Panc1 (cell line): ENCODE measurements at regions of chr12 and their contacts with region 1.

Region 1: DNA sequence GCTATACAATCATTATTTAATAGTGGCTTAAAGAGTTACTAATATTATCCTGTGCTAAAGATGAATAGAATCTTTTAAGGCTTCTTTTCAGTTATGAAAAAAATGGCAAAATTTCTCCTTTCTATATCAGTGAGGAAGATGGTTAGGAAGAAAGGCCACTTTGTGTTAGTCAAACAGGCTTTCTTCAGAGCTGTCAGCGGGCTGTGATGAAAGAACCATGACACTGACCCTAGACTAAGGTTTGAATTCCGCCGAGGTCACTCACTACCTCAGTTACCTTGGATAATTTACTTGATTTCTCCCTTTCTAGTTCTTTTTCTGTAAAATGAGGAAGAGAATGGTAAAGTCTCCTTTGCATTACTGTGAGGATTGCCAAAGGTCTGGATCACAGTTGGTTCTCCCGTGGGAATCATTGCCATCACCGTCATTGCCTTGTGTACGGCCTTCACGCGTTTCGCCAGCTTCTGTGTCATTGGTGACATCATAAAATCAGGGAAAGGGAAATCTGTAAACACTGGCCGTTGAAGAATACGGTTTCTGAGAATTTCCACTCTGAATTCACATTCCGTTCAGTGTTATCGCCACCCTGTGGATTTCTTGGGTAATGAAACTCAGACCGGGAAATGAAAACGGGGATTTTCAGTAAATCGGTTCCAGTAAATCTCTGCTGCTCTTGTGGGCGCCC is 26.7 kb upstream of the YBX3 start:
- DNase-seq: peak; percentile 78
- ATAC-seq: peak; percentile 89
- H3K4me3 ChIP-seq: peak overlapping the region; percentile 30 to 54
- H3K27ac ChIP-seq: peak overlapping the region; percentile 61; the same call in 1 of the 2 replicates
- H3K4me1 ChIP-seq: no peaks in the 10 kb centered on the region
- H3K27me3 ChIP-seq: no peaks in the 10 kb centered on the region
- CTCF ChIP-seq: peak; percentile 92

Region 2: GRCh38 chr12:10613349-10614055 is 136.3 kb before region 1 on chr12 and contains the start of gene MAGOHB:
- CTCF ChIA-PET with region 1: no interaction called
- POLR2A ChIA-PET with region 1: no interaction called
- in situ Hi-C with region 1: no loop called
- intact Hi-C with region 1: loop called (anchors 10 kb)
- DNase-seq: peak; percentile 74
- ATAC-seq: peak; percentile 98
- H3K4me3 ChIP-seq: peak within 1 kb of the TSS; percentile 89 to 91
- H3K27ac ChIP-seq: peak within 1 kb of the TSS; percentile 92
- H3K4me1 ChIP-seq: no peaks in the 10 kb centered on the region; the same call in 1 of the 2 replicates
- H3K27me3 ChIP-seq: no peaks in the 10 kb centered on the region
- CTCF ChIP-seq: no peak
- total RNA-seq, gene MAGOHB: 22.5 TPM